GM12878 (cell line): ENCODE measurements at regions of chr6 and their contacts with region 1.

Region 1: DNA sequence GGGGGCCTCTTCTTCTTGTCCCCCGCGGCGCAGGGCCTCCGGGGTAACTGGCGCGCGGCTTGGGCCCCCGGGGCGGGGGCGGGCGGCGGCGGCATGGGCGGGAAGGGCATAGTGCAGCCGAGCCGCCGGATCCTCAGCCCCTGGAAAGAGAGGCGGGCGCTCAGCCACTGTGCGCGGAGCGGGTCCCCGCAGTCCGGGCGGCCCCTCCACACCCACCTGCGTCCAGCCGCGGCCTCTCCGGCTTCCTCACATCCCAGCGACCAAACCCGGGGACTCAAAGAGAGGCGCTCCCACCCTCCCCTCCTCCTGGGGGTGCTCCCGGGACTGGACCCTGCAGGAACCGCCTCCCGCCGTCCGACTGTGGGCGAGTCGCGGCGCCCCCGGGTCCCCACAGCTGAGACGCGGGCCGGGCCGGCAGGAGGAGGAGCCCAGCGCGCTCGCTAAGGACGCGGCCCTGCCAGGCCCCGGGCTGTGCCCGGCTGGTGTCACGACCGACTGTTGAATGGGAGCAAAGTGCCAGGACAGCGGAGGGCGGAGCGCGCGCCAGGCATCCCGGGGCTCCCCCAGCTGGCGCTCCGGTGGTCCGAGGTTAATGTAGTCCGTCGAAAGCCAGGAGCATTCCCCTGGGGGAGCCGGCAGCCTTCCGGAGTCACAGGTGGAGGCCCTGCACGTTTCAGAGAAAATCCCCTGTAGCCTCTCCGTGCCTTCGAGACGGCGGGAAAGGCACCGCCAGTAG is at the start of gene PRR18:
- DNase-seq: peak; percentile 42
- ATAC-seq: peak; percentile 77
- H3K4me3 ChIP-seq: peak within 1 kb of the TSS; percentile 67
- H3K27ac ChIP-seq: peak within 1 kb of the TSS; percentile 48; the same call in 1 of the 2 replicates
- H3K4me1 ChIP-seq: no peaks in the 10 kb centered on the region
- H3K27me3 ChIP-seq: no peaks in the 10 kb centered on the region; a peak in 2 of 4 replicates
- CTCF ChIP-seq: no peak
- EP300 ChIP-seq: no peak
- POLR2A ChIP-seq: peak; percentile 52; the same call in 1 of the 2 replicates
- RAD21 ChIP-seq: no peak
- polyA plus RNA-seq, gene PRR18: 0.26 to 0.84 TPM

Region 2: GRCh38 chr6:166106076-166106686 is 202.0 kb before region 1 on chr6:
- CTCF ChIA-PET with region 1: no interaction called
- POLR2A ChIA-PET with region 1: no interaction called
- RAD21 ChIA-PET with region 1: no interaction called
- SMC1A ChIA-PET with region 1: no interaction called
- in situ Hi-C with region 1: no loop called
- intact Hi-C with region 1: no loop called
- DNase-seq: peak; percentile 36
- ATAC-seq: peak; percentile 84
- H3K4me3 ChIP-seq: no peak overlapping the region
- H3K27ac ChIP-seq: no peak overlapping the region
- H3K4me1 ChIP-seq: no peaks in the 10 kb centered on the region; the same call in 1 of the 2 replicates
- H3K27me3 ChIP-seq: no peaks in the 10 kb centered on the region
- CTCF ChIP-seq: peak; percentile 81 to 95 (median 90)
- EP300 ChIP-seq: no peak
- POLR2A ChIP-seq: no peak
- RAD21 ChIP-seq: peak; percentile 91

Region 3: GRCh38 chr6:166281104-166281503 is 27.1 kb before region 1 on chr6:
- CTCF ChIA-PET with region 1: interaction called, 58 read pairs
- POLR2A ChIA-PET with region 1: interaction called, 8 read pairs
- RAD21 ChIA-PET with region 1: interaction called, 60 read pairs
- SMC1A ChIA-PET with region 1: interaction called, 29 read pairs
- in situ Hi-C with region 1: loop called (anchors 5 kb)
- intact Hi-C with region 1: loop called (anchors 1 kb)
- DNase-seq: no peak
- ATAC-seq: peak; percentile 67
- H3K4me3 ChIP-seq: no peak overlapping the region
- H3K27ac ChIP-seq: peak overlapping the region; percentile 48
- H3K4me1 ChIP-seq: peaks cover 38% of the 10 kb centered on the region
- H3K27me3 ChIP-seq: no peaks in the 10 kb centered on the region
- CTCF ChIP-seq: no peak
- EP300 ChIP-seq: no peak
- POLR2A ChIP-seq: no peak
- RAD21 ChIP-seq: no peak

Region 4: GRCh38 chr6:166296035-166296883 is 11.9 kb before region 1 on chr6:
- CTCF ChIA-PET with region 1: interaction called, 8 read pairs
- POLR2A ChIA-PET with region 1: interaction called, 4 read pairs
- RAD21 ChIA-PET with region 1: interaction called, 5 read pairs
- SMC1A ChIA-PET with region 1: interaction called, 24 read pairs
- in situ Hi-C with region 1: no loop called
- intact Hi-C with region 1: no loop called
- DNase-seq: no peak
- ATAC-seq: no peak
- H3K4me3 ChIP-seq: no peak overlapping the region
- H3K27ac ChIP-seq: no peak overlapping the region
- H3K4me1 ChIP-seq: no peaks in the 10 kb centered on the region
- H3K27me3 ChIP-seq: no peaks in the 10 kb centered on the region
- CTCF ChIP-seq: no peak
- EP300 ChIP-seq: no peak
- POLR2A ChIP-seq: no peak
- RAD21 ChIP-seq: no peak

Region 5: DNA sequence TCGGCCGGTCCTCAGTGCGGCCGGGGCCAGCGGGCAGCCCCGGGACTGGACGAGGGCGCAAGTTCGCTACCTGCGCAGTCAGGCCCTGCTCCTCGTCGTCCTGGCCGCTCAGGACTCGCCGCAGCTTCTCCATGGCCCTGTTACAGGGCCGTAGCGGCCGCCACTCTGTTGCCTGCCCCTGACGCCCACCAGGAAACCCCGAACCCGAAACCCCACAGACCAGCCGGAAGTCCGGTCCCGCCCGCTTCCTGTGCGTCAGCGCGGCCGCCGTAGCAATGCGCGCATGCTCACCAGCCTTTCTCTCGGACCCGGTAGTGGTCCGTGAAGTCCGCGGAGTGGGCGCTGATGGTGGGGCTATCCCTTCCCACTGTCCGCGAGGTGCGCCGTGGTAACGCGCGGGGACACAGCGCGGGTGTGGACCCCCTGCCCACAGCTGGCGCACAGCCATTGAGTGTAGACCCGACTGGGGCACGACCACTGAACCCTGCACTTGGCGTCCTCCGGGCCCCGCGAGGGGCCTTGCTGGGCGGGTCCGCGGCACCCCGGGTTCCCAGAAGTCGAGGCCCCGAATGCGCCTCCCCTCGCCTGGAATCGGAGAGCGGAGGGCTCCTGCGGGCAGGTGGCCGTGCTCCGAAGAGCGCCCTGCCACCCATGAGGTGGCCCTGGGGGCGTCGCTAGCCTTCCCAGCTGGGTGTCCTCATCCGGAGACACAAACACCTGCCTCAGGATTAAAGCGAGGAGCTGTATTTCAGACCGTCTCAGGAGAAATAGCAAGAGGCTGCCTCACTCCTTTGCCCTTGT is 34.3 kb after region 1 on chr6 and contains the start of gene SFT2D1:
- CTCF ChIA-PET with region 1: interaction called, 25 read pairs
- POLR2A ChIA-PET with region 1: interaction called, 4 read pairs
- RAD21 ChIA-PET with region 1: interaction called, 12 read pairs
- SMC1A ChIA-PET with region 1: interaction called, 8 read pairs
- in situ Hi-C with region 1: no loop called
- intact Hi-C with region 1: loop called (anchors 1 kb)
- DNase-seq: peak; percentile 66
- ATAC-seq: peak; percentile 84
- H3K4me3 ChIP-seq: peak within 1 kb of the TSS; percentile 96
- H3K27ac ChIP-seq: peak within 1 kb of the TSS; percentile 99
- H3K4me1 ChIP-seq: peaks cover 3% of the 10 kb centered on the region; the same call in 1 of the 2 replicates
- H3K27me3 ChIP-seq: no peaks in the 10 kb centered on the region
- CTCF ChIP-seq: no peak
- EP300 ChIP-seq: peak; percentile 64 to 68; a peak in 2 of 4 replicates
- POLR2A ChIP-seq: peak; percentile 99
- RAD21 ChIP-seq: no peak
- polyA plus RNA-seq, gene SFT2D1: 119 to 149 TPM